BJ (cell line): ENCODE measurements at regions of chr7 and their contacts with region 1.

Region 1: DNA sequence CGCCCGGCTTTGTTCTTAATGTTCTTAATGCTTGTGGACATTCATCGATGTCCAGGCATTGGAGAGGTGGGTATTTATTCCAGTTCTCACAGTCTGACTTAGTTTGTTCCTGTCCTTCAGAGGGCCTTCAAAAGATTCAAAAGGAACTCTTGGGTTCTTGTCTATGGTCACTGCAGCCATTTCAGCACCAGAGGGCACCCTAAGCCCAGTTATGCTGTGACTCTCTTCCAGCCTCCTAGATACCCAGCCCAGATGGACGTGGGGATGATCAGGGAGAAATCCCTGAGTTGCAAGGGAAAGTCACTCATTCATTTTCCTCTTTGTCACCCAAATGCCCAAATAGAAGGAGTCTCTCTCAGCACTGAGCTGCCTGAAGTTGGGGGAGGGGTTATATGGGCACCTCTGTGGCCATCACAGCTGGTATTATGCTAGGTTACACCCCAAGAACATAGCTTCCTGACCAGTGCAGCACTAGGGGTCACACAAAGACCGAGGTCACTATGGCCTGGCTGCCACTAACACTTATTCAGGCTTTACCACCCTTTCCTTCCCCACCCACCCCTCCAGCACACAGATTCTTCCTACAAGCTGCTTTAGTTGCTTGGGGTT is 26.5 kb upstream of the CCDC126 start:
- DNase-seq: peak; percentile 16
- H3K4me3 ChIP-seq: no peak overlapping the region
- H3K27me3 ChIP-seq: no peaks in the 10 kb centered on the region
- CTCF ChIP-seq: peak; percentile 86

Region 2: GRCh38 chr7:23546897-23547572 is 23.7 kb before region 1 on chr7:
- CTCF ChIA-PET with region 1: interaction called, 11 read pairs
- POLR2A ChIA-PET with region 1: no interaction called
- DNase-seq: peak; percentile 62
- H3K4me3 ChIP-seq: no peak overlapping the region
- H3K27me3 ChIP-seq: no peaks in the 10 kb centered on the region
- CTCF ChIP-seq: peak; percentile 94

Region 3: GRCh38 chr7:23586159-23586558 is 15.5 kb after region 1 on chr7:
- CTCF ChIA-PET with region 1: interaction called, 12 read pairs
- POLR2A ChIA-PET with region 1: no interaction called
- DNase-seq: no peak
- H3K4me3 ChIP-seq: no peak overlapping the region
- H3K27me3 ChIP-seq: no peaks in the 10 kb centered on the region
- CTCF ChIP-seq: no peak

Region 4: DNA sequence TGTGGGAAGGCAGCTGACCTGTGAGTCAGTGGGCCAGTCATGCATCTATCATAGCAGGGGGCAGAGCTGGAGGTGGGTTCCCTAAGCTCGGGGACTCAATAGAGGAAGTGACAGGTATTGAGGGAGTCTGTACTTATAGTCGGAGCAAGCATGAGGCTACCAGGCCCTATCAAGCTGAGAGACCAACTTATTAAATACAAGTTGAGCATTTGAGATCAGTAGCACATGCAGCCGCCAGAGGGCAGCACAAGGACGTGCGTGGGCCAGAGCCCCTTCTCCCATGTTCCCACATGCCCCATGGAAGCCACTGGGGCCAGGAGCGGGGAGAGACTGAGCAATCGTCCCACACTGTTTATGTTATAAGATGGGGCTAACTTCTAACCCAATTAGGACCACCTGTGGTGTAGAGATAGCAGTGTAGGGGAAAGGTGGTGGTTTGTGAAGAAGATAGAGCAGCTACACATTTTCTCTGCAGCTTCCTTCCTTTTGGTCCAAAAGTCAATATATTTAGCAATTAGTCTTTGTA is 126.3 kb after region 1 on chr7:
- CTCF ChIA-PET with region 1: interaction called, 16 read pairs
- POLR2A ChIA-PET with region 1: no interaction called
- DNase-seq: no peak
- H3K4me3 ChIP-seq: no peak overlapping the region
- H3K27me3 ChIP-seq: no peaks in the 10 kb centered on the region
- CTCF ChIP-seq: peak; percentile 73